ENCODE measurements at regions of chr5 and their contacts with region 1.

Region 1: GRCh38 chr5:93582677-93583438 is at the start of gene NR2F1:
- DNase-seq: peak; percentile 66
- H3K4me3 ChIP-seq: peak within 1 kb of the TSS; percentile 25
- H3K27ac ChIP-seq: peak within 1 kb of the TSS; percentile 55
- H3K4me1 ChIP-seq: peaks cover 6% of the 10 kb centered on the region
- H3K27me3 ChIP-seq: peaks cover 65% of the 10 kb centered on the region
- CTCF ChIP-seq: no peak
- total RNA-seq, gene NR2F1: 2.7 to 2.9 TPM

Region 2: DNA sequence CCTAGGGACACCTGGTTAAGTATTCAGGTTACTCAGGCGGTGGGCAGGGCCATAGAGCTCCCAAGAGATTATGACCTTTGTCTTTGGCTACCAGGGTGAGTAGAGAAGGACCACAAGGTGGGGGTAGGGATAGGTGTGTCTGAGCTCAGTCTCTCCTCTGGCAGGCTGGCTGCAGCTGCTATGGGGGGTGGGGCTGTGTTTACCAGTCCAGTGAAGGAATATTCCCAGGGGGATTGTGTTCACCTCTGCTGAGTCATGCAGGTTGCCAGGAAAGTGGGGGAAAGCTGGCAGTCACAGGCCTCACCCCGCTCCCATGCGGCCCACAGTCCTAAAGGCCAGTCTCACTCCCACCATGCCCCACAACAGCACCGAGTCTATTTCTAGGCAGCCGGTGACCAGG is 212.1 kb after region 1 on chr5:
- intact Hi-C with region 1: loop called (anchors 5 kb)
- DNase-seq: no peak
- H3K4me3 ChIP-seq: no peak overlapping the region
- H3K27ac ChIP-seq: no peak overlapping the region
- H3K4me1 ChIP-seq: no peaks in the 10 kb centered on the region
- H3K27me3 ChIP-seq: no peaks in the 10 kb centered on the region
- CTCF ChIP-seq: no peak

Region 3: GRCh38 chr5:93915142-93915553 is 332.3 kb after region 1 on chr5:
- intact Hi-C with region 1: loop called (anchors 10 kb)
- DNase-seq: no peak
- H3K4me3 ChIP-seq: no peak overlapping the region
- H3K27ac ChIP-seq: no peak overlapping the region
- H3K4me1 ChIP-seq: no peaks in the 10 kb centered on the region
- H3K27me3 ChIP-seq: no peaks in the 10 kb centered on the region
- CTCF ChIP-seq: peak; percentile 50